OCI-LY7 (cell line): ENCODE measurements at regions of chr12 and their contacts with region 1.

Region 1: GRCh38 chr12:3195859-3196483 is 118.8 kb downstream of the TSPAN9 start:
- DNase-seq: no peak
- H3K4me3 ChIP-seq: no peak overlapping the region
- H3K27ac ChIP-seq: no peak overlapping the region
- H3K4me1 ChIP-seq: no peaks in the 10 kb centered on the region
- CTCF ChIP-seq: no peak

Region 2: GRCh38 chr12:2526371-2526770 is 669.6 kb before region 1 on chr12:
- CTCF ChIA-PET with region 1: no interaction called
- POLR2A ChIA-PET with region 1: no interaction called
- intact Hi-C with region 1: no loop called
- DNase-seq: no peak
- H3K4me3 ChIP-seq: no peak overlapping the region
- H3K27ac ChIP-seq: no peak overlapping the region
- H3K4me1 ChIP-seq: no peaks in the 10 kb centered on the region
- CTCF ChIP-seq: no peak

Region 3: GRCh38 chr12:3213188-3213587 is 17.2 kb after region 1 on chr12:
- CTCF ChIA-PET with region 1: interaction called, 11 read pairs
- POLR2A ChIA-PET with region 1: no interaction called
- intact Hi-C with region 1: no loop called
- DNase-seq: no peak
- H3K4me3 ChIP-seq: no peak overlapping the region
- H3K27ac ChIP-seq: no peak overlapping the region
- H3K4me1 ChIP-seq: peaks cover 20% of the 10 kb centered on the region
- CTCF ChIP-seq: no peak

Region 4: GRCh38 chr12:3252450-3252891 is 56.5 kb after region 1 on chr12:
- CTCF ChIA-PET with region 1: no interaction called
- POLR2A ChIA-PET with region 1: no interaction called
- intact Hi-C with region 1: no loop called
- DNase-seq: no peak
- H3K4me3 ChIP-seq: no peak overlapping the region
- H3K27ac ChIP-seq: no peak overlapping the region
- H3K4me1 ChIP-seq: peaks cover 11% of the 10 kb centered on the region
- CTCF ChIP-seq: no peak

Region 5: DNA sequence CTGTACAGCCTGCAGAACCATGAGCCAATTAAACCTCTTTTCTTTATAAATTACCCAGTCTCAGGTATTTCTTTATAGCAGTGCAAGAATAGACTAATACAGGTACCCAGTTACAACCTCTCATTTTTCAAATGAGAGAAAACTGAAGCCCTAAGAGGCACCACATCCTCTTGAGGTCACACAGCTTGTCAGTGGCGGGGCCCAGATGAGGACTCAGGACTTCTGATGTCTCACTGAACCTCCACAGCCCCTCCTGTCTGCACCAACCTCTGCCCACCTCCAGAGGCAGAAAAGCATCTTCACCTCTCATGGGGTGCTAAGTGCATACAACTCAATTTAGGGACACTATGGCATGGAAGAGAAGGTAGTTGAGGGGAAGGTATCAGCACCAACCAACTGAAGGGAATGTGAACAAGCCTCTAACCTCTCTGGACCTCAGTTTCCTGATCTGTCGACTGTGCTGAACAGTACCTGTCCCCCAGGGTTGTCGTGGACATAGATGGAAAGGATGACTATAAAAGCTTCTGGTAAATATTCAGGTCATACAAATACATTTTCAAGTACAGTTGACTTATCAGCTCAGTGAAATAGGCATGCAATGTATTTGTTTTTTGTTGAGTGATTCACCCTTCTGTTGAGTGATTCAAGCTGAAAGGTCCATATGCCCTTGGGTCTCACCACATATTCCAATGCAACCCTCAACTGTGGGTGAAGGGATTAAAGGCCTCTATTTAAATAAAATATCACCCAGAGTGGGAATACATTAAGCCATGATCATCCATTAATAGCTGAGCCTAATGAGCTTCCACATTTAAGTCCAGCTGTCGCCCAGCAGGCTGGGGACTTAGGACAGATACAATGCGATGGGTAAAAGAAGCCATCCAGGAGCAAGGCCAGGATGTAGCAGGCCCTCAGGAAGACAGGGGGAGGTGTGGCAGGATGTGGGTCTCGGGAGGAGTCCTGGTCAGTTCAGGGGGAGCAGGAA is 436.6 kb after region 1 on chr12:
- CTCF ChIA-PET with region 1: no interaction called
- POLR2A ChIA-PET with region 1: no interaction called
- intact Hi-C with region 1: no loop called
- DNase-seq: no peak
- H3K4me3 ChIP-seq: no peak overlapping the region
- H3K27ac ChIP-seq: no peak overlapping the region
- H3K4me1 ChIP-seq: no peaks in the 10 kb centered on the region
- CTCF ChIP-seq: no peak